Caco-2 (cell line): ENCODE measurements at regions of chr12 and their contacts with region 1.

Region 1: GRCh38 chr12:56724972-56725722 is at the start of gene NACA:
- DNase-seq: peak; percentile 98 to 99
- H3K4me3 ChIP-seq: peak within 1 kb of the TSS; percentile 68
- H3K4me3 Mint-ChIP-seq: peak within 1 kb of the TSS; percentile 99
- H3K27ac Mint-ChIP-seq: peak within 1 kb of the TSS; percentile 99
- H3K4me1 ChIP-seq: peaks cover 29% of the 10 kb centered on the region
- H3K4me1 Mint-ChIP-seq: peaks cover 31% of the 10 kb centered on the region
- H3K27me3 ChIP-seq: no peaks in the 10 kb centered on the region
- H3K27me3 Mint-ChIP-seq: no peaks in the 10 kb centered on the region
- CTCF ChIP-seq: no peak
- total RNA-seq, gene NACA: 784 and 804 TPM in 2 replicates

Region 2: GRCh38 chr12:56688129-56688845 is 36.9 kb before region 1 on chr12 and contains the start of gene PTGES3:
- CTCF ChIA-PET with region 1: interaction called, 5 read pairs
- POLR2A ChIA-PET with region 1: interaction called, 51 read pairs
- intact Hi-C with region 1: loop called (anchors 1 kb)
- DNase-seq: peak; percentile 98
- H3K4me3 ChIP-seq: peak within 1 kb of the TSS; percentile 68
- H3K4me3 Mint-ChIP-seq: peak within 1 kb of the TSS; percentile 87
- H3K27ac Mint-ChIP-seq: peak within 1 kb of the TSS; percentile 92
- H3K4me1 ChIP-seq: no peaks in the 10 kb centered on the region
- H3K4me1 Mint-ChIP-seq: no peaks in the 10 kb centered on the region
- H3K27me3 ChIP-seq: no peaks in the 10 kb centered on the region
- H3K27me3 Mint-ChIP-seq: no peaks in the 10 kb centered on the region
- CTCF ChIP-seq: no peak
- total RNA-seq, gene PTGES3: 241 and 242 TPM in 2 replicates

Region 3: DNA sequence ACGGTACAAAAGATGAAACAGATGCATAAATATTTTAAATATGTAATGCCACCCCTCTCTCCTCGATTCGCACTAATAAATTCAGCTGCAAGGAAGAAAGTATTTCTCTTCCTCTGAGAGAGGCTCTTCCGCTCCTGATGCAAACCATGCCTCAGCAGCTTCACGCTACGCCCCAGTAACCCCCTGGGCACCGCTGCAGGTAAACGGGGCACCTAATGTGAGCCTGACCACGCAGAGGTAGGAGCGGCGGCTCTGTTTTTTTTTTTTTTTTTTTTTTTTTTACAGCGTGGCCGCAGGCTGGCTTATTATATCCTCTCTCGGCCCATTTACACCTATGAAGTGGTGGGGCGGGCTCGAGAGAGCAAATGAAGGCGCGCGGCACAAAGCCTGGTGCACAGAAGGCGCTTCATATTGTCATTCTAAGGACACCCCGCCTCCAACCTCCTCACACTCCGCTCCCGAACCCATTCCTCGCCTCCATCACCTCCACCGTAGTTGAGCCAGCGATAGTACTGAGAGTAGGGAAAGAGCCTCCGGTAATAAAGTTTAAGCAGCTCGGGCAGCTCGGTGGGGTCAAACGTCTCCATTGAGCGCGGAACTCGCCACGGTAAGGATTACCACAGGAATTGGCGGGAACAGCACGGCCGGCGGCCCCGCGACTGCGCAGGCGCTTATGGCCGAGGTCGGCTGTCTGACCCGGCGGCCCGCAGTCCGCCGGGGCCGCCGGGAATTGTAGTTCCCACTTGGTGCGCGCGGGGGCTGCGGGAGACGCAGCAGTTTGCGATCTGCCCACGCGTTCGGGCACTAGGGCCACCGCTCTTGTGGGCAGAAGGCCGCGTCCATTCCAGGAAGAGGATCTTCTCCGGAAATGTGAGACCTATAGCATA is 26.8 kb after region 1 on chr12 and contains the start of gene PRIM1:
- CTCF ChIA-PET with region 1: no interaction called
- POLR2A ChIA-PET with region 1: interaction called, 6 read pairs
- intact Hi-C with region 1: loop called (anchors 1 kb)
- DNase-seq: peak; percentile 88 to 90
- H3K4me3 ChIP-seq: peak within 1 kb of the TSS; percentile 57
- H3K4me3 Mint-ChIP-seq: peak within 1 kb of the TSS; percentile 96
- H3K27ac Mint-ChIP-seq: peak within 1 kb of the TSS; percentile 81
- H3K4me1 ChIP-seq: no peaks in the 10 kb centered on the region
- H3K4me1 Mint-ChIP-seq: peaks cover 9% of the 10 kb centered on the region
- H3K27me3 ChIP-seq: no peaks in the 10 kb centered on the region
- H3K27me3 Mint-ChIP-seq: no peaks in the 10 kb centered on the region
- CTCF ChIP-seq: peak in 1 of 2 experiments; percentile 76
- total RNA-seq, gene PRIM1: 38.0 and 40.2 TPM in 2 replicates